Ascending aorta (tissue), 2 donors: ENCODE measurements at regions of chr6 and their contacts with region 1.

Region 1: DNA sequence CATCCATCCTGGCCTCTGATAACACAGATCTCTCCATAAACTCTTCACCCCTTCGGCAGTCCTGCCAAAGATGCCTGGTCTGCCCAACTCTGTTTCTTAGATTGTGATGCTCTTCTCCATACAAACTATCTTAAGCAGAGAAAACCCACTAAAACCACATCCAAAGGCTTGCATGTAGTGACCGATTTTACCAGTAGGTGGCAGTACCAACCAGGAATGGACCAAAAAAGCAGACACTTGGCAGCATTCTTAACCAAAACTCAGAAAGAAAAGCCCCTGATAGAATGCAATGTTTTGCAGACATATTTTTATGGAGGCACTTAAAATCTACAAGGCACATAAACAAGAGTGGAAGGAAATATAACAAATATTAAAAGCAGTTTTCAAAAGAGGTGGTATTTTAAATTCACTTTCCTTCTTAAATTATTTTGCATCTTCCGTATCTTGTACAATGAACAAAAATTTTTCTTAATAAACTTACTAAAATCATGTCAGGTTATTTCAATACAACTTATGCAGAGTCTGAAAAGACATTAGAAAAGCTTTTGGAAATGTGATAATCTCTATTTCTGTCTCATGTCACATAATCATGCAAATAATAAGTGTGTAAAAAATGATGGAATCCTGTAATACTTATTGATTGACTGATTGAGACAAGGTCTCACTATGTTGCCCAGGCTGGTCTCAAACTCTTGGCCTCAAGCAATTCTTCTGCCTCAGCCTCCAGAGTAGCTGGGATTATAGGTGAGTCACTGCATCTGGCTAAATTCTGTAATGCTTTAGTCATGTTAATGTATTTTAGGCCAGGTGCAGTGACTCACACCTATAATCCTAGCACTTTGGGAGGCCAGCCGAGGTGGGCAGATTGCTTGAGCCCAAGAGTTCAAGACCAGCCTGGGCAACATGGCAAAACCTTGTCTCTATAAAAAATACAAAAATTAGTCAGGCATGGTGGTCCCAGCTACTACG is 29.4 kb downstream of the LRP11 start:
- DNase-seq: peak in 1 of 2 donors; percentile 76
- H3K4me3 ChIP-seq: no peak overlapping the region
- H3K27ac ChIP-seq: no peak overlapping the region
- H3K4me1 ChIP-seq: no peaks in the 10 kb centered on the region
- H3K27me3 ChIP-seq: no peaks in the 10 kb centered on the region
- CTCF ChIP-seq: peak; percentile 76 to 94 (median 90)

Region 2: GRCh38 chr6:148471624-148472159 is 1363.1 kb before region 1 on chr6:
- intact Hi-C with region 1: loop called (anchors 5 kb)
- DNase-seq: no peak
- H3K4me3 ChIP-seq: peak overlapping the region in 1 of 2 donors; percentile 31
- H3K27ac ChIP-seq: peak overlapping the region; percentile 64 to 65
- H3K4me1 ChIP-seq: peaks cover 0 to 4% of the 10 kb centered on the region in 2 donors
- H3K27me3 ChIP-seq: no peaks in the 10 kb centered on the region
- CTCF ChIP-seq: no peak

Region 3: DNA sequence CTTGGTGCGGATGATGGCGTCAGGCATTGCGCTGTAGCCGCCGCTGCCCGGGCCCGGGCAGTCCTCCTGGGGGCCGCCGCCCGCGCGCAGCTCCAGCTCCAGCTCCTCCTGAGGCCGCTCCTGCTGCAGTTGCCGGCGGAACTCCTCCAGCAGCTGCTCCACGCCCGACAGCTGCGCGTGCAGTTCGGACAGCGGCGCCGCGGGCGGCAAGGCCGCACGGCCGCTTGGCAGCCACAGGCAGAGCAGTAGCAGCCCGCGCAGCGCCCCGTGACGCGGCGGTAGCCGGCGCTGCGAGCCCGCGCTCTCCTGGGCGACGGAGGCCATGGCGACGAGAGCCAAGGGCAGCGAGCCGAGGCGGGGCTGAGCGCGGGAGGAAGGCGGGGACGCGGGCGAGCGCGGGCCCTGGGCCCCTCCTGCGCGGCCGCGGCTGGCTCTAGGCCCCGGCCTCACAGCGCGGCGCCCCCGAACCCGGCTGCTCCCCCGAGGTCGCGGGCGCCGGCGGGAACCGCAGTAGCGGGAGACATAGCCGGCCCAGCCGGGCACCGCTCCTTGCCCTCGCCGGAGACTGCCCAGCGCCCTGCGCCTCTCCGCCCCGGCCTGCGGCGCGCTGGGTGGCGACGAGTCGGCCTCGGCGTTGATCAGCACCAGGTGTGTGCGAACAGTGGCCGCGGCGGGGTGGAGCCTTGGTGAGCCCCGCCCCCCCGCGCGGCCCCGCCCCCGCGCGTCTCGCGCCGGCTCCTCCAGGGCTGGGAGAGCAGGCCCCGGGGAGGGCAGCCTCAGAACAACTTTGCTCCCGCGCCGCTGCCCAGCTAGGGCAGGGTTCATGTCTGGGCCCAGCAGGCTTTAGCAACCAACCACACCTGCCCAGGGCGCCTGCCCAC is 29.1 kb after region 1 on chr6 and contains the start of gene LRP11:
- intact Hi-C with region 1: loop called (anchors 1 kb)
- DNase-seq: peak; percentile 47 to 91
- H3K4me3 ChIP-seq: peak within 1 kb of the TSS; percentile 68 to 74
- H3K27ac ChIP-seq: peak within 1 kb of the TSS; percentile 90 to 98
- H3K4me1 ChIP-seq: peaks cover 5 to 9% of the 10 kb centered on the region in 2 donors
- H3K27me3 ChIP-seq: no peaks in the 10 kb centered on the region
- CTCF ChIP-seq: no peak
- total RNA-seq, gene LRP11: 39.1 TPM

Region 4: GRCh38 chr6:150016324-150017185 is 181.8 kb after region 1 on chr6:
- intact Hi-C with region 1: loop called (anchors 5 kb)
- DNase-seq: peak in 1 of 2 donors; percentile 69
- H3K4me3 ChIP-seq: no peak overlapping the region
- H3K27ac ChIP-seq: no peak overlapping the region
- H3K4me1 ChIP-seq: no peaks in the 10 kb centered on the region
- H3K27me3 ChIP-seq: peaks cover 16% of the 10 kb centered on the region
- CTCF ChIP-seq: peak; percentile 67 to 78 (median 77)